ENCODE measurements at regions of chr2 and their contacts with region 1.

Region 1: DNA sequence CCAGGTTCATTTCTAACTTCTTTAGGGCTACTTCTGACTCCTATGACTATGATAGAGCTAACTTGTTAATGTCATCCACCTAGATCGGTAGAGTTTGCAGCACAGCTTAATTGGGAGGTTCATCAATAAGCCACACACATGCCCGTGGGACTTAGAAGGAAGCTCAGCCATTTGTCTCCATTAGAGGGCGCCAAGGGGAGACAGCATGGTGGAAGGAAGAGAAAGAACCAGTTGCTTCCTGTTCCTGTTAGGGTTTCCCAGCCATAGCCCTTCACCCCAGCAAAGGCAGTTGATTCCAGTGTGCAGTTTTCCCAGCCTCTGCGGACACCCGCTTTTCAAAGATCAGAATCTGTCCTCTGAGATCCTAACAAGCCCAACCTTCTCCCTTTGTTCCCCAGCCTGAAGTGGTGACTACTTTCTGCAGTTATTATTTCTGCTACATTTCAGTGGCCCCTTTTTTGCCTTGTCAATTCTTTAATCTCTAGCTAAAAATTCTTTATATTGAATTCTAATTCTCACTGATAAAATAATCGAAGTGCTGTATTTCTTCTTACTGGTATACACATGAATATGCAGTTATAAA is 30.3 kb downstream of the MAIP1 start:
- DNase-seq: no peak
- ATAC-seq: peak; percentile 84

Region 2: DNA sequence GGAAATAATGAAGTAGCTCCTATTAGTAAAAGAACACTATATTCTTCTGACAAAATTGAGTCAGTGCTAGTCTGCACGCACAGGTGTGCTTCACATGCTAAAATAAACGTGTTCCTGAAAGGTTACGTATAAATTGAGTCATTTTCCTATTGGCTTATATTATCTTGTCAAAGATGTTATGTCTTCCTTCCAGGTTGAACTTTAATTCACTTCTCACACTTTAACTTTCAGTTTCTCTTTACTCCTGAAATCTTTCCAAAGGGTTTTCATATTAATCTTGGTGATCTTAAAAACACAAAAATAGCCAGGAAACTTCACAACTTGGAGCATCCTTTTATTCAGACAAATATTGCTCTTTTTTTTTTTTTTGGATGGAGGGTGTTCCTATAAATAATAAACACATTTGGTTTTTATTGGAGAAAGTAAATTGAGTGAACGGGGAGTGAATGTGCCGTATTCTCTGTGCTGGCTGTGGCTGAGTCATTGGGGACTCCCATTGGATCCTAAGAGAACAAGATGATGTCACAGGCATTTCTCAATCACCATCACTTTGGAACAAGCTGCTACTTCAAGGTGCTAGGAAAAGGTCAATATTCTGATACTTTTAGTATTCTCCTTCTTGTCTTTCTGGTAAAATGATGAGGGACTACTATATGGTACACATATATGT is 170.6 kb after region 1 on chr2:
- intact Hi-C with region 1: loop called (anchors 5 kb)
- DNase-seq: no peak
- ATAC-seq: peak; percentile 86